ENCODE measurements at regions of chr13 and their contacts with region 1.

Region 1: DNA sequence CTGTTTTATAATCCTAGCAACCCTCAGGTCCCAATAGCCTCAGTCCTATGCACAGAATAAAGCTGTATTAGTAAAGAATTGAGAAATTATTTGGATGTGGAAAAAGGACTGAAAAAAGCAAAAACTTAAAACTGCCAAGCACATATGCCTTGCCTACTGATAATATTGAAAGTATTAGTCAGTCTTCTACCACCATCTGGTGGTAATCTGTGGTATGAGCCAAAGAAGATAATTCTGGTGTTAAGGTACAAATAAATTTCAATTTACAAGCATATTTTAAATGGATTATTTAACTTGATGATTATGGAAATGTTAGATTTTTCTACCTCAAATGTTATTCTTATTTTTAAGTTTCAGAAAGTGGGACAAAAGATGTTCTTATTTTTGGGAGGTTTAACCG is 460.3 kb upstream of the KLHL1 start:
- DNase-seq: peak; percentile 25
- ATAC-seq: peak; percentile 52; the same call in 1 of the 3 replicates
- H3K4me3 ChIP-seq: no peak overlapping the region
- H3K27ac ChIP-seq: no peak overlapping the region
- H3K4me1 ChIP-seq: no peaks in the 10 kb centered on the region
- H3K27me3 ChIP-seq: no peaks in the 10 kb centered on the region; a peak in 1 of 5 replicates
- CTCF ChIP-seq: peak; percentile 66
- EP300 ChIP-seq: no peak
- POLR2A ChIP-seq: no peak
- RAD21 ChIP-seq: 0 out of 2 replicates have a peak, but pooled peaks have one; percentile 20

Region 2: GRCh38 chr13:69524459-69525155 is 1044.0 kb before region 1 on chr13:
- CTCF ChIA-PET with region 1: no interaction called
- POLR2A ChIA-PET with region 1: no interaction called
- in situ Hi-C with region 1: loop called (anchors 25 kb)
- intact Hi-C with region 1: no loop called
- DNase-seq: no peak
- ATAC-seq: no peak
- H3K4me3 ChIP-seq: no peak overlapping the region
- H3K27ac ChIP-seq: no peak overlapping the region
- H3K4me1 ChIP-seq: no peaks in the 10 kb centered on the region
- H3K27me3 ChIP-seq: no peaks in the 10 kb centered on the region; a peak in 1 of 5 replicates
- CTCF ChIP-seq: no peak
- EP300 ChIP-seq: no peak
- POLR2A ChIP-seq: no peak
- RAD21 ChIP-seq: no peak

Region 3: DNA sequence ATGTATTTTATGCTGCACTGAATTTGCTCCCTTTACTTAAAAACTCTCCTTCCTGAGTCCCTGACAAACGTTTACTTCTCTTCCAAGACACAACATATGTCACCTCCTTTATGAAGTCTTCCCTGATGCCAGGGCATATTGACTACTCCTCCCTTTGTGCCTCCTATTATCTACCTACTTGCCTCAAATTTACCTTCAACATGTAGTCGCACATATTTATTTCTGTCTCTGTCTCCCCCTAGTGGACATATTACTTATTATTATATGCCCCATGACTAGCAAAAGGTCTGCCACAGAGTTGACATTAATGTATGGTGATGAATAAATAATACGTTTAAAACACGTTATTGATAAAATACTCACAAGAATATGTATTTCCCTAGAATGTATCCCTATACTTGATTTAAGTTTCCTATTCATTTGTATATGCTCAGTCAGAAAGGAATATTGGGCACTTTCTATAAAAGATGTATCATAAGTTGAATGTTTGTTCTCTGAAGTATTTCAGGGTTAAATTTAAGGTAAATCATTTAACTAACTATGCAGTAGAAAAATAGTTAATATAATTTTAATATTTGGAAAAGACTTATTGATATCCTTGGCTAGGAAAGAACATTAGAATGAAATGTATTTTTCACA is 711.3 kb before region 1 on chr13:
- CTCF ChIA-PET with region 1: no interaction called
- POLR2A ChIA-PET with region 1: no interaction called
- in situ Hi-C with region 1: no loop called
- intact Hi-C with region 1: loop called (anchors 2 kb)
- DNase-seq: peak; percentile 52
- ATAC-seq: peak; percentile 82
- H3K4me3 ChIP-seq: no peak overlapping the region
- H3K27ac ChIP-seq: no peak overlapping the region
- H3K4me1 ChIP-seq: no peaks in the 10 kb centered on the region
- H3K27me3 ChIP-seq: no peaks in the 10 kb centered on the region
- CTCF ChIP-seq: peak; percentile 69
- EP300 ChIP-seq: no peak
- POLR2A ChIP-seq: no peak
- RAD21 ChIP-seq: no peak

Region 4: GRCh38 chr13:70098669-70099068 is 469.9 kb before region 1 on chr13:
- CTCF ChIA-PET with region 1: no interaction called
- POLR2A ChIA-PET with region 1: no interaction called
- in situ Hi-C with region 1: loop called (anchors 25 kb)
- intact Hi-C with region 1: loop called (anchors 1 kb)
- DNase-seq: no peak
- ATAC-seq: peak; percentile 43; the same call in 1 of the 3 replicates
- H3K4me3 ChIP-seq: no peak overlapping the region
- H3K27ac ChIP-seq: no peak overlapping the region
- H3K4me1 ChIP-seq: no peaks in the 10 kb centered on the region
- H3K27me3 ChIP-seq: no peaks in the 10 kb centered on the region
- CTCF ChIP-seq: no peak
- EP300 ChIP-seq: no peak
- POLR2A ChIP-seq: no peak
- RAD21 ChIP-seq: no peak

Region 5: DNA sequence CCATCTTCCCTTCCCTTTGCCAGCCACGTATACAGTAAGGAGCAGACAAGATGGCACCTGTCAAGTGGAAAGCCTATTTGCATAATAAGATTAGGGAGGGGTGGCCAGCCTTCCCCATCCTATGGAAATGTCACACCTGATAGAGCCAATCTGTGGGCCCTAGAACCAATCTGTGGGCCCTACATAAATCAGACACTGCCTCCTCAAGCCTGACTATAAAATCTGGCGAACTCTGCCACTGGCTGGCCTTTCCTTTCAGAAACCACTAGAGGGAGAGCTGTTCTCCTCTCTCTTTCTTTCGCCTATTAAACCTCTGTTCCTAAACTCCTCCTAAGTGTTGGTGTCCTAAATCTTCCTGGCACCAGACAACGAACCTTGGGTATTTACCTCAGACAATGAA is 228.8 kb before region 1 on chr13:
- CTCF ChIA-PET with region 1: interaction called, 14 read pairs
- POLR2A ChIA-PET with region 1: no interaction called
- in situ Hi-C with region 1: loop called (anchors 10 kb)
- intact Hi-C with region 1: loop called (anchors 1 kb)
- DNase-seq: peak; percentile 21
- ATAC-seq: peak; percentile 92
- H3K4me3 ChIP-seq: no peak overlapping the region
- H3K27ac ChIP-seq: no peak overlapping the region
- H3K4me1 ChIP-seq: no peaks in the 10 kb centered on the region
- H3K27me3 ChIP-seq: no peaks in the 10 kb centered on the region
- CTCF ChIP-seq: peak; percentile 53
- EP300 ChIP-seq: no peak
- POLR2A ChIP-seq: no peak
- RAD21 ChIP-seq: no peak

Region 6: DNA sequence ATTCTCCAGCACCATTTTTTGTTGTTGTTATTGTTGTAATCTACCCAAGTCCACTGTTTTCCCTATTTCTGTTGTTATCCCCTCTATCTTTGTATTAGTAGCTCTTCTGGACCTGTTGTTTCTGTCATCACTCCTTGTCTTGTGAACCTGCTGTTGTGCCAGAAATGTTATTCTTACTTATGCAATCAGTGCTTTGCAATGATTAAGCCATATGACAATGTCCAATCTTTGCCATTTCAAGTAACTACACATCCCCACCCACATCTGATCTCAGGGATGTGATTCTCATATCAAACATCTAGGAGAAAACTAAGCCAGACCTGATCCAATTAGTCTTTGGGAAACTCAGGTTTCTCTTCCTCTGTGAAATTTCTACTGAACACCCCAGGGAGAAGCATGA is 12.3 kb after region 1 on chr13:
- CTCF ChIA-PET with region 1: no interaction called
- POLR2A ChIA-PET with region 1: no interaction called
- in situ Hi-C with region 1: no loop called
- intact Hi-C with region 1: loop called (anchors 2 kb)
- DNase-seq: no peak
- ATAC-seq: no peak
- H3K4me3 ChIP-seq: no peak overlapping the region
- H3K27ac ChIP-seq: no peak overlapping the region
- H3K4me1 ChIP-seq: no peaks in the 10 kb centered on the region
- H3K27me3 ChIP-seq: no peaks in the 10 kb centered on the region; a peak in 1 of 5 replicates
- CTCF ChIP-seq: no peak
- EP300 ChIP-seq: no peak
- POLR2A ChIP-seq: no peak
- RAD21 ChIP-seq: no peak

Region 7: GRCh38 chr13:70668283-70668682 is 99.7 kb after region 1 on chr13:
- CTCF ChIA-PET with region 1: no interaction called
- POLR2A ChIA-PET with region 1: no interaction called
- in situ Hi-C with region 1: no loop called
- intact Hi-C with region 1: no loop called
- DNase-seq: peak; percentile 3
- ATAC-seq: no peak
- H3K4me3 ChIP-seq: no peak overlapping the region
- H3K27ac ChIP-seq: no peak overlapping the region
- H3K4me1 ChIP-seq: no peaks in the 10 kb centered on the region
- H3K27me3 ChIP-seq: no peaks in the 10 kb centered on the region; a peak in 1 of 5 replicates
- CTCF ChIP-seq: no peak
- EP300 ChIP-seq: no peak
- POLR2A ChIP-seq: no peak
- RAD21 ChIP-seq: no peak